A673 (cell line): ENCODE measurements at regions of chr3 and their contacts with region 1.

Region 1: DNA sequence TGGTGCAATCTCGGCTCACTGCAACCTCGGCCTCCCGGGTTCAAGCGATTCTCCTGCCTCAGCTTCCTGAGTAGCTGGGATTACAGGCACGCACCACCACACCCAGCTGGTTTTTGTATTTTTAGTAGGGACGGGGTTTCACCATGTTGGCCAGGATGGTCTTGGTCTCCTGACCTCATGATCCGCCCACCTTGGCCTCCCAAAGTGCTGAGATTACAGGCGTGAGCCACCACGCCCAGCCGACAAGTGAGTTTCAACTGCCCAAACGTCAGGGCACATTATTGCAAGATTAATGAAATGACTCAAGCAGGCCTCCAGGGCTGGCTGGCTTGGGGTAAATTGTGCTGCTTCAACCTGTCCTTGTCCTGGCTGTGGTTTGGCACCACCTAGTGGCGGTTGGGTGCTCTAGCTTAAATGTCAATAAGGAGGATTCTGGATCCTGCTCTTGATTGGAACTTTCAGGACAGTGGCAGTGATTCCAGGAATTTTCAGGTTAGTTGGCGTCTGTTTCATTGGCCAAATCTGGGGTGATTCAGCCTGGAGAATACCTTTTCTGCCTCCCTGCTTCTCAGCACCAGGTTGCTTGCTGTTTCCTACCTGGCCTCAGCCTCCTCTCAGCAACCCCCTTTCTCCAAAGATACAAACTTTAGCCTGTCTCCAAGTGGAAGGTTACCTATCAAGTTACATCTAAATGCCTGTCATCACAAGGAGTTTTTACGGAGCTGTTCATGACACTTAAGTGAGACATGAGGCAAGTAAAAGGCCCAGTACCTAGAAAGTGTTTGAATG is 32.4 kb upstream of the SACM1L start:
- DNase-seq: peak; percentile 87
- H3K4me3 ChIP-seq: no peak overlapping the region
- H3K27ac ChIP-seq: no peak overlapping the region
- H3K4me1 ChIP-seq: peaks cover 4% of the 10 kb centered on the region
- H3K27me3 ChIP-seq: no peaks in the 10 kb centered on the region
- CTCF ChIP-seq: peak; percentile 68

Region 2: DNA sequence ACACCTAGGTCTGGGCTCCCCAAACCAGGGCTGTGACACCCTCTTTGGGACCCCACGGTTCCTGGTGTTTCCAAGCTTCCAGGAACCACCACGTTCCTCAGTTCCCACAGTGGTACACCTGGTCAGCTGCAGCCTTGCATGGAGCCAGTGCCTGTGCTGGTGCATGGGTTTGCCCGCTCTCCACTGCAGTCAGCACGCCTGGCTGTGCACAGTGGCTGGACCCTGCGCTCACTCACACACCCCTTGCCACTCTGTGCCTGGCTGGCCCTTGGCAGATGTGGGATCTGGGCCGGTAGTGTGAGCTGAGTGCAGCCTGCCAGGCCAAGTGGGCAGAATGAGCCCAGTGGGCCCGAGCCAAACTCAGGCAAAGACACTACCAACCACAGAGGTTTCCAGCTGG is 1269.4 kb before region 1 on chr3:
- CTCF ChIA-PET with region 1: interaction called, 12 read pairs
- POLR2A ChIA-PET with region 1: no interaction called
- intact Hi-C with region 1: no loop called
- DNase-seq: no peak
- H3K4me3 ChIP-seq: no peak overlapping the region
- H3K27ac ChIP-seq: no peak overlapping the region
- H3K4me1 ChIP-seq: no peaks in the 10 kb centered on the region
- H3K27me3 ChIP-seq: no peaks in the 10 kb centered on the region
- CTCF ChIP-seq: no peak

Region 3: DNA sequence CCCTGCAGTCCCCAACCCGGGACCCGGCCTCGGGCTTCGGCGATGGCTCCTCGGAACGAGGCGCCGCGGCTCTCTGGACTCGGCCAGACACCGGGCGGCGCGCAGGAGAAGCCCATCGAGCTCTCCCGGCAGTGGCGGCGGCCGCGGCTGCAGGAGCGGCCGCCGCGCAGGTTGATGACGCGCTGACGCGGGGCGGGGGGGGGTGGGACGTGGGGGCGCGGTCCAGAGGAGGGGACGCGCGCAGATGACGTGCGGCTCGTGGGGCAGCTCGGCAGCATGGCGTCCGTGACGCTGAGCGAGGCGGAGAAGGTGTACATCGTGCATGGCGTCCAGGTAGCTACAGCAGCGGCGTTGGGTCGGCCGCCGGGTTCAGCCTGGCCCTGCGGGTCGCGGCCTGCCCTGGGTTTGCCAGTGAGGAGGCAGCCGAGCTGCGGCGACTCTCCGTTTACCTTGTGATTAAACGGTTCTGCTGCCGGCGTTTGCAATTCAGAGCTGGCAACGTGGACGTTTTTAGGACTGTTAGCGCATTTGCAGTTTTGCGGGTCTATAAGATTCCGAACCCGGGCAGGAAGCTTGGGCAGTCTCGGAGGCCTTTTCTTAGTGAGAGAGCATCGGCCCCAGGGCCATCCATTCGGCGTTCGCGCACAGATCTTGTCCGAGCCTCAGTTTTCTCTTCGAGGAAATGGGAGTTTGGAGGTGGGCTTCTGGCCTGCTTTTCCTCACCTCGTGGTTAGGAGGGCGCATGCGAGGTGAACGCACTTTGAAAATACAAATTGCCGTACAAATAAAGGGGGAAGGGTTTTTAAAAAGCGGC is 680.6 kb before region 1 on chr3 and contains the starts of genes EXOSC7 and ZDHHC3:
- CTCF ChIA-PET with region 1: interaction called, 15 read pairs
- POLR2A ChIA-PET with region 1: no interaction called
- intact Hi-C with region 1: no loop called
- DNase-seq: peak; percentile 83
- H3K4me3 ChIP-seq: peak within 1 kb of the TSS; percentile 90
- H3K27ac ChIP-seq: peak within 1 kb of the TSS; percentile 95
- H3K4me1 ChIP-seq: peaks cover 12% of the 10 kb centered on the region
- H3K27me3 ChIP-seq: no peaks in the 10 kb centered on the region
- CTCF ChIP-seq: no peak
- total RNA-seq, gene EXOSC7: 47.4 and 57.3 TPM in 2 replicates
- total RNA-seq, gene ZDHHC3: 94.7 and 95.2 TPM in 2 replicates

Region 4: DNA sequence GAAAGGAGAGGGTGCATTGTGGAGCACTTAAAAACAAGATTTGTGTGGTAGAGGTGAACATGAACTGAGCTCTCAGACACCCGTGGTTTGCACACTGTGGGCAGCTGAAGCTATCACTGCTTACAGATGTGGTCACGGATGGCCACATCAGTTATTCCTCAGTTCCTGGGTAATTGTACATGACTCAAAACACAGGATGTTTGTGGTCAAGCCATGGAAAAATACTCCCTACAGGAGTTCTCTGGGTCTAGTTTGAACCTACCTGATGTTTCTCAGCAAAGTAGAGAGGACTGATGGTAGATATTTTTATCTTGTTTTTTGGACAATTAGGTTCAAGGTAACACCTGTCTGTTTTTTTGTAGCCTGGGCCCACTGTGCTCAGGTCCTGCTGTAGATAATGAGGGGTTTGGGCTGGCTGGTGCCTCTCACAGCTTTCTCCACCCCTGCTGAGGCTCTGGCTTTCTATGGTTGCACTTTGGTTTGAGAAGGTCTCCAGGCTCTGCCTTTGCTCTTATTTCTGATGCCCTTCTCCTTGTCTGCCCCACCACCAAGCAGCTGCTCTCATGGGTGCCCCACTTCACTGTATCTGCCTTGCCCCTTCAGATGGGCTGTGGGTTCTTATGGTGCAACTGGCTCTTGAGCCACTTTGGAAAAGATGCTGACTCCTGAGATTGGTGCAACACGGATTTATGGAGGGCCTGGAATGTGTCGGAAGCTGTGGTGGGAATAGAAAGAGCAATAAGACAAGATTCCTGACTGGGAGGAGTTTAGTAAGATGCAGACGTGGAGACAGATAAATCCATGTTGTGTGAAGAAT is 550.7 kb before region 1 on chr3:
- CTCF ChIA-PET with region 1: no interaction called
- POLR2A ChIA-PET with region 1: no interaction called
- intact Hi-C with region 1: no loop called
- DNase-seq: no peak
- H3K4me3 ChIP-seq: no peak overlapping the region
- H3K27ac ChIP-seq: no peak overlapping the region
- H3K4me1 ChIP-seq: no peaks in the 10 kb centered on the region
- H3K27me3 ChIP-seq: no peaks in the 10 kb centered on the region
- CTCF ChIP-seq: no peak

Region 5: DNA sequence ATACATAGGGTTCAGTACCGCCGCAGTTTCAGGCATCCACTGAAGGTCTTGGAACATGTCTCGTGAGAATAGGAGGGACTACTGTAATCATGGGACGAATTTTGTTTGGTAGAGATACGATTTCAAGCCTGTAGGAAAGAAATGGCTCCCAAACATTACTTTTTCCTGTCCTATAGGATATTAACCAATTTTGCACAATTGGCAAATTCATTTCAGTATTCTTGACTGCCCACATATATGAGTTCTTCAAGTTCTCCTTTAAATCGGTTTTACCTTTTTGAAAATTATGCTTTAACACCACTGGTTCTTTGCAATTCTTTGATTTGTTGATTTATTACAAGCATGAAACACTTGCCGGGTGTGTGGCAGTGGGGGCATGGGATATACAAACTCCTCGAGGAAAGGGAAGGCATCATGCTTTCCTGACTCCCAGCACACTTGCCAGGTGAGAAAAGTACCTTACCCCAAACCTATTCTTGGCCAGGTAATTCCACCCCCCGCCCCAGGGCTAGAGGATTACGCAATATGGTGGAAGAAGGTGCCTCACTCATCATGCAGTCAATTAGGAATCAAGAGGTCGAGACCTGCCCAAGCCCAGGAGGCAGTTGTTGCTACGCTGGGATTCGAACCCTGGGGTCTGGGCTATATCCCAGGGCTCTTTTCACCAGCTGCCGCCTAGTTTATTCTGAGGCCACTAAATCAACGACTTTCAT is 269.0 kb before region 1 on chr3:
- CTCF ChIA-PET with region 1: no interaction called
- POLR2A ChIA-PET with region 1: interaction called, 23 read pairs
- intact Hi-C with region 1: no loop called
- DNase-seq: no peak
- H3K4me3 ChIP-seq: peak overlapping the region; percentile 82
- H3K27ac ChIP-seq: no peak overlapping the region
- H3K4me1 ChIP-seq: no peaks in the 10 kb centered on the region
- H3K27me3 ChIP-seq: no peaks in the 10 kb centered on the region
- CTCF ChIP-seq: no peak

Region 6: GRCh38 chr3:45507820-45508317 is 148.9 kb before region 1 on chr3:
- CTCF ChIA-PET with region 1: interaction called, 7 read pairs
- POLR2A ChIA-PET with region 1: no interaction called
- intact Hi-C with region 1: loop called (anchors 2 kb)
- DNase-seq: peak; percentile 82
- H3K4me3 ChIP-seq: no peak overlapping the region
- H3K27ac ChIP-seq: peak overlapping the region; percentile 99
- H3K4me1 ChIP-seq: peaks cover 57% of the 10 kb centered on the region
- H3K27me3 ChIP-seq: no peaks in the 10 kb centered on the region
- CTCF ChIP-seq: peak; percentile 49

Region 7: GRCh38 chr3:45593708-45594609 is 62.8 kb before region 1 on chr3:
- CTCF ChIA-PET with region 1: interaction called, 9 read pairs
- POLR2A ChIA-PET with region 1: interaction called, 3 read pairs
- intact Hi-C with region 1: loop called (anchors 1 kb)
- DNase-seq: peak; percentile 76
- H3K4me3 ChIP-seq: peak overlapping the region; percentile 64
- H3K27ac ChIP-seq: peak overlapping the region; percentile 78
- H3K4me1 ChIP-seq: peaks cover 8% of the 10 kb centered on the region
- H3K27me3 ChIP-seq: no peaks in the 10 kb centered on the region
- CTCF ChIP-seq: no peak

Region 8: GRCh38 chr3:45712472-45713110 is 55.8 kb after region 1 on chr3:
- CTCF ChIA-PET with region 1: no interaction called
- POLR2A ChIA-PET with region 1: no interaction called
- intact Hi-C with region 1: no loop called
- DNase-seq: peak; percentile 16
- H3K4me3 ChIP-seq: no peak overlapping the region
- H3K27ac ChIP-seq: no peak overlapping the region
- H3K4me1 ChIP-seq: no peaks in the 10 kb centered on the region
- H3K27me3 ChIP-seq: no peaks in the 10 kb centered on the region
- CTCF ChIP-seq: no peak